Breast epithelium (tissue), 4 donors: ENCODE measurements at regions of chr11 and their contacts with region 1.

Region 1: GRCh38 chr11:8717876-8718753 is 35.5 kb downstream of the RPL27A start:
- DNase-seq: peak in 1 of 2 donors; percentile 74
- H3K4me3 ChIP-seq: peak overlapping the region in 1 of 3 donors; percentile 29
- H3K27ac ChIP-seq: peak overlapping the region; percentile 98
- H3K4me1 ChIP-seq: peaks cover 36 to 81% of the 10 kb centered on the region in 2 donors
- H3K27me3 ChIP-seq: no peaks in the 10 kb centered on the region
- CTCF ChIP-seq: no peak
- POLR2A ChIP-seq: no peak

Region 2: GRCh38 chr11:7904914-7905313 is 813.2 kb before region 1 on chr11:
- intact Hi-C with region 1: no loop called
- DNase-seq: no peak
- H3K4me3 ChIP-seq: peak overlapping the region in 2 of 3 donors; percentile 36 to 48
- H3K27ac ChIP-seq: peak overlapping the region; percentile 75
- H3K4me1 ChIP-seq: no peaks in the 10 kb centered on the region
- H3K27me3 ChIP-seq: no peaks in the 10 kb centered on the region
- CTCF ChIP-seq: no peak
- POLR2A ChIP-seq: no peak

Region 3: GRCh38 chr11:8777907-8778767 is 60.0 kb after region 1 on chr11:
- intact Hi-C with region 1: no loop called
- DNase-seq: peak in 1 of 2 donors; percentile 51
- H3K4me3 ChIP-seq: peak overlapping the region in 1 of 3 donors; percentile 3
- H3K27ac ChIP-seq: peak overlapping the region; percentile 68 to 84
- H3K4me1 ChIP-seq: peaks cover 3% of the 10 kb centered on the region in 2 donors
- H3K27me3 ChIP-seq: no peaks in the 10 kb centered on the region
- CTCF ChIP-seq: no peak
- POLR2A ChIP-seq: no peak

Region 4: GRCh38 chr11:8807544-8808225 is 89.6 kb after region 1 on chr11:
- intact Hi-C with region 1: loop called (anchors 10 kb)
- DNase-seq: no peak
- H3K4me3 ChIP-seq: peak overlapping the region; percentile 54 to 73 (median 61)
- H3K27ac ChIP-seq: peak overlapping the region; percentile 95
- H3K4me1 ChIP-seq: peaks cover 6 to 9% of the 10 kb centered on the region in 2 donors
- H3K27me3 ChIP-seq: no peaks in the 10 kb centered on the region
- CTCF ChIP-seq: no peak
- POLR2A ChIP-seq: no peak

Region 5: DNA sequence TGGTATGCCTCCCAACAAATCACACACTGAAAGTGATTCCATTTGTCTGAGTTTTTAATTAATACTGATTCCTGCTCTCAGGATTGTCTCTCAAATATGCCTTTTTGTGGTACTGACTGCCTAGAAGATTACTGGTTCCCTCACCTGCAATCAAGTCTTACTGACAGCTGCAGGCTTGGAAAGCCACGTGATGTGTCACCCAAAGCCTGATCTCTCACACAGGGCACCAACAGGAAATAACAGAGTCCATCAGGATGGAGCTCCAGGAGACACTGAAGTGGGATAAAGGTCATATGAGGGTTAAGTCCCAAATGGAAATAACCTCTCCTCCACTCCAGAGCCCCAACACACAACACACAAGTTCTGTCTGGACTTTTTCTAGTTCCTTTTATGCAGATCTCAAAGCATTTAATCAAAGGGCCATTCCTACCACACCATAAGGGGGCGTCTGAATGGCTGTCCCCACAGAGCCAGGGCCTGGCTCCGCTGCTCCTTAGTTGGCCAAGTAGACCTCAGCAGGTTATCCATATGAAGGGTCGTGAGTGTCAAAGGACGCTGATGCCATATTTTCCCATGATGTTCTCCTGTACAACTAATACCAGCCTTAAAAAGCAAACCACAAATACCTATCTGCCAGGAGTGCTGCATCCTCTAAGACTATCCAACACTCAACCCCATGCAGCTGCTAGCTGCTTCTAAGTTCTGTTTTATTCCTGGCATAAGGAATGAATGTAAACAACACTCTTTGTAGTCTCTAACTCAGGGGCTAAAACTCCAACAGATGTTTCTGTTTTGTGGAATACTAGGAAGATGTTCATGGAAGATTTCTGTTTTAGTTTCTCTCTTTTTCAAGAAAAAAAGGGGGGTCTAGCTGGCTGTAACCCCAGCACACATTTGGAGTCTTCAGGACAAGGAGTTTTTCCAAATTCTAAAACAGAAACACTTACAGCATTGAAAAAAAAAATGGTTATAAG is 360.3 kb after region 1 on chr11:
- intact Hi-C with region 1: no loop called
- DNase-seq: no peak
- H3K4me3 ChIP-seq: no peak overlapping the region
- H3K27ac ChIP-seq: peak overlapping the region in 1 of 2 donors; percentile 32
- H3K4me1 ChIP-seq: peaks cover 0 to 4% of the 10 kb centered on the region in 2 donors
- H3K27me3 ChIP-seq: no peaks in the 10 kb centered on the region
- CTCF ChIP-seq: no peak
- POLR2A ChIP-seq: no peak